B cell (primary cell): ENCODE measurements at regions of chr4 and their contacts with region 1.

Region 1: GRCh38 chr4:104860238-104861123 is 286.2 kb upstream of the TET2 start:
- DNase-seq: peak; percentile 70
- ATAC-seq: peak; percentile 62
- H3K4me3 ChIP-seq: no peak overlapping the region
- H3K4me3 Mint-ChIP-seq: no peak overlapping the region
- H3K27ac ChIP-seq: no peak overlapping the region
- H3K27ac Mint-ChIP-seq: no peak overlapping the region
- H3K4me1 ChIP-seq: no peaks in the 10 kb centered on the region
- H3K4me1 Mint-ChIP-seq: no peaks in the 10 kb centered on the region
- H3K27me3 ChIP-seq: no peaks in the 10 kb centered on the region
- H3K27me3 Mint-ChIP-seq: no peaks in the 10 kb centered on the region
- CTCF ChIP-seq: peak; percentile 89

Region 2: GRCh38 chr4:103732418-103732817 is 1128.1 kb before region 1 on chr4:
- CTCF ChIA-PET with region 1: no interaction called
- POLR2A ChIA-PET with region 1: no interaction called
- intact Hi-C with region 1: no loop called
- DNase-seq: no peak
- ATAC-seq: no peak
- H3K4me3 ChIP-seq: no peak overlapping the region
- H3K4me3 Mint-ChIP-seq: no peak overlapping the region
- H3K27ac ChIP-seq: no peak overlapping the region
- H3K27ac Mint-ChIP-seq: no peak overlapping the region
- H3K4me1 ChIP-seq: no peaks in the 10 kb centered on the region
- H3K4me1 Mint-ChIP-seq: no peaks in the 10 kb centered on the region
- H3K27me3 ChIP-seq: no peaks in the 10 kb centered on the region
- H3K27me3 Mint-ChIP-seq: no peaks in the 10 kb centered on the region
- CTCF ChIP-seq: no peak

Region 3: DNA sequence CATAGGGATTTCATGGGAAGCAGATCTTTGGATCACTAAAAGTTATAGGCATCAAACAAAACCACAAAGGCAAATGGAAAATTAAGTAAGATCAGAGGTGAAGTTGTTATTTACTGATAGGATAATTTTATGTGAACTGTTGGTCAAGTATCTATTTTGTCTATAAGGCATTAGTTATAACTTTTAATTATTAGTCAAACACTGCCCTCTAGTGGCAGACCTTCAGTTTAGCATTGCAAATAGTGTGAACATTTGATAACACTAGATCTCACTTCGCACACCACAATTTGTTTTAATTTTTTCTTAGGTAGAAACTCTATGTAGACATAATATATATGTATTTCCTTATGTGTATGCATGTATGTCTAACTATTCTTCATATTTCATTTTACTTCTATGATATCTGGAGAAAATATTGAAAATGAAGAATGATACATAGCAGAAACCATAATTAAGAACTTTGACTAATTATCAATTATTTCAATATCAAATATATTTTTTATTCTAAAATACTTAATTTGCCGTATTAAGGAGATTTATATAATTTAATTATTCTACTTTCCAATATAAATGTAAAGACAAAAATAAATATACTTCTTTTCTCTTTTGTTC is 926.2 kb before region 1 on chr4:
- CTCF ChIA-PET with region 1: no interaction called
- POLR2A ChIA-PET with region 1: no interaction called
- intact Hi-C with region 1: loop called (anchors 5 kb)
- DNase-seq: peak; percentile 33
- ATAC-seq: no peak
- H3K4me3 ChIP-seq: no peak overlapping the region
- H3K4me3 Mint-ChIP-seq: no peak overlapping the region
- H3K27ac ChIP-seq: no peak overlapping the region
- H3K27ac Mint-ChIP-seq: no peak overlapping the region
- H3K4me1 ChIP-seq: no peaks in the 10 kb centered on the region
- H3K4me1 Mint-ChIP-seq: no peaks in the 10 kb centered on the region
- H3K27me3 ChIP-seq: no peaks in the 10 kb centered on the region
- H3K27me3 Mint-ChIP-seq: no peaks in the 10 kb centered on the region
- CTCF ChIP-seq: peak; percentile 97

Region 4: DNA sequence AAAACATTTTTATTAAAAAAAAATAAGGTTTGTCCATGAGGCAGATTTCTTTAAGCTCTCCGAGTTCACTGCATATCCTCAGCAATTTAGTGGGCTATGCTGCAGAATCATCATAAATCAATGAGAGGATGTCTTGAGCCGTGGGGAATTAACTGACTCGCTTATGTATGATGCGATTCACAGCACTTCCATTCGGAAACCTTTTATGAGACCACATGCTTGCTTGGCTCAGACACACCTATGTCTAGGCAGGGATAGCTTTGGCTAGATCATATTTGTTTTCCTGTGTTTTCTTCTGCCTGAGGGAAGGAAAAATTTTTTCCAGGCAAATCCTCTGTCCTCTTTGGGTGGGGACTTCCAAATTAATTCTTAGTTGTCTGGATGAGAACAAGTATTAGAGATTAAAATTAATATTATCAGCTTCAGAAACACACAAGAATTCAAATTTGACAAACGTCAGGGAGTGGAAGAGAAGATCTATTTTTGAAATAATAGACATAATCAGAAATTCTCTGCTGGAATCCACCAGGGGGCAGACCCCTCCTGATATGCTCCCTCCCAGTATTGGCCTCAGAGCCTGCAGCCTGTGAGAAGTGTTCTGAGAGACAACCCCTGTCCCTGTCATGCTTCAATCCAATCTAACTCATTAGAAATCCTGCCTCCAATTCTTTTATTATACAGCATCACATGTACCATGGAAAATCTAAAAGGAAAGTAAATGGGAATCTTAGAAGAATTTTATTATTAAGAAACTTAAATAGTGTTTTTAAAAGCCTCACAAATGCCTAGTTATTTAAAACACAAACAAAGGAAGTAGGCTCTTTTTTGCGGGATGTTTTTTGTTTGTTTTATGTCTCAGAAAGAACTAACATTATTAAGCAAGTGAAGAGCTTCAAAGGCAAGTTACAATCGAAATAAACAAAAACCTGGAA is 795.6 kb before region 1 on chr4:
- CTCF ChIA-PET with region 1: no interaction called
- POLR2A ChIA-PET with region 1: no interaction called
- intact Hi-C with region 1: loop called (anchors 5 kb)
- DNase-seq: no peak
- ATAC-seq: no peak
- H3K4me3 ChIP-seq: no peak overlapping the region
- H3K4me3 Mint-ChIP-seq: no peak overlapping the region
- H3K27ac ChIP-seq: no peak overlapping the region
- H3K27ac Mint-ChIP-seq: no peak overlapping the region
- H3K4me1 ChIP-seq: no peaks in the 10 kb centered on the region
- H3K4me1 Mint-ChIP-seq: no peaks in the 10 kb centered on the region
- H3K27me3 ChIP-seq: no peaks in the 10 kb centered on the region
- H3K27me3 Mint-ChIP-seq: no peaks in the 10 kb centered on the region
- CTCF ChIP-seq: peak; percentile 24

Region 5: GRCh38 chr4:104693599-104694201 is 166.8 kb before region 1 on chr4:
- CTCF ChIA-PET with region 1: interaction called, 21 read pairs
- POLR2A ChIA-PET with region 1: no interaction called
- intact Hi-C with region 1: loop called (anchors 1 kb)
- DNase-seq: peak; percentile 32
- ATAC-seq: no peak
- H3K4me3 ChIP-seq: no peak overlapping the region
- H3K4me3 Mint-ChIP-seq: no peak overlapping the region
- H3K27ac ChIP-seq: no peak overlapping the region
- H3K27ac Mint-ChIP-seq: no peak overlapping the region
- H3K4me1 ChIP-seq: no peaks in the 10 kb centered on the region
- H3K4me1 Mint-ChIP-seq: no peaks in the 10 kb centered on the region
- H3K27me3 ChIP-seq: no peaks in the 10 kb centered on the region
- H3K27me3 Mint-ChIP-seq: no peaks in the 10 kb centered on the region
- CTCF ChIP-seq: peak; percentile 65

Region 6: GRCh38 chr4:104848597-104849225 is 11.8 kb before region 1 on chr4:
- CTCF ChIA-PET with region 1: interaction called, 16 read pairs
- POLR2A ChIA-PET with region 1: no interaction called
- intact Hi-C with region 1: no loop called
- DNase-seq: no peak
- ATAC-seq: no peak
- H3K4me3 ChIP-seq: no peak overlapping the region
- H3K4me3 Mint-ChIP-seq: no peak overlapping the region
- H3K27ac ChIP-seq: no peak overlapping the region
- H3K27ac Mint-ChIP-seq: no peak overlapping the region
- H3K4me1 ChIP-seq: no peaks in the 10 kb centered on the region
- H3K4me1 Mint-ChIP-seq: no peaks in the 10 kb centered on the region
- H3K27me3 ChIP-seq: no peaks in the 10 kb centered on the region
- H3K27me3 Mint-ChIP-seq: no peaks in the 10 kb centered on the region
- CTCF ChIP-seq: no peak